Cardiac septum (tissue), 1 donor: ENCODE measurements at regions of chr6 and their contacts with region 1.

Region 1: DNA sequence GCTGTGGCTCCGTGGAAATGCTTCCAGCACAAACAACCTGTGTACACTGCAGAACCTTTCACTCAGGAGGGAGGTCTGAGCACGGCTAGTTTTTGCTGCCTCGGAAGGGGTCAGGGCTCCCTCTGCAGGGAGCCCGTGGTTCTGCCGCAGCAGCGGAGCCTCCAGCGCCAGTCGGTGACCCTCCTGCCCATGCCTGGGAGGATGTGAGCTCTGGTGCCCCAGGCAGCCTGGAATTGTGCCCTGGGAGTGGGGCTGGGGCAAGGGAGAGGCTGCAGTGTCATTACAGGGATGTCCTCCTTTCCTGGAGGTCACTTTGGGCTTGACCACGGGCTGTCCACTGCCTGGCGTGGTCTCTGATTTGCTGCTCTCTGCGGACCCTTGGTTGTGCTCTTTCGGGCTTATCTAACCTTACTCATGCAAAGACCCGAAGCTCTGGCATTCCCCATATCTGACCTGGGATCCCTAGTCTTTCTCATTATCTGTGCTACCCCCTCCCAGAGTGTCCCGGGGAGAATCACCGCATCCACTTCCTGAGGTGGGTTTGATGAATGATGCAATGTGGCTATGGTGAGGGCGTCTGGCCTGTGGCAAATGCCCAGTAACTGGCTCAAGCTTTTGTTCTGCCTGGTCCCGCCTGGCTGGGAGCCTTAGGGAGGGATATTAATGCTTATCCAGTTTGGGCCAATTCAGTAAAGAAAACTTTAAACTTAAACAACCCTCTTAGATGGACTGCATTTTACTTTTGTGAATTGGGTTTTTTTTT is 59.6 kb upstream of the TAGAP start:
- DNase-seq: peak; percentile 87

Region 2: DNA sequence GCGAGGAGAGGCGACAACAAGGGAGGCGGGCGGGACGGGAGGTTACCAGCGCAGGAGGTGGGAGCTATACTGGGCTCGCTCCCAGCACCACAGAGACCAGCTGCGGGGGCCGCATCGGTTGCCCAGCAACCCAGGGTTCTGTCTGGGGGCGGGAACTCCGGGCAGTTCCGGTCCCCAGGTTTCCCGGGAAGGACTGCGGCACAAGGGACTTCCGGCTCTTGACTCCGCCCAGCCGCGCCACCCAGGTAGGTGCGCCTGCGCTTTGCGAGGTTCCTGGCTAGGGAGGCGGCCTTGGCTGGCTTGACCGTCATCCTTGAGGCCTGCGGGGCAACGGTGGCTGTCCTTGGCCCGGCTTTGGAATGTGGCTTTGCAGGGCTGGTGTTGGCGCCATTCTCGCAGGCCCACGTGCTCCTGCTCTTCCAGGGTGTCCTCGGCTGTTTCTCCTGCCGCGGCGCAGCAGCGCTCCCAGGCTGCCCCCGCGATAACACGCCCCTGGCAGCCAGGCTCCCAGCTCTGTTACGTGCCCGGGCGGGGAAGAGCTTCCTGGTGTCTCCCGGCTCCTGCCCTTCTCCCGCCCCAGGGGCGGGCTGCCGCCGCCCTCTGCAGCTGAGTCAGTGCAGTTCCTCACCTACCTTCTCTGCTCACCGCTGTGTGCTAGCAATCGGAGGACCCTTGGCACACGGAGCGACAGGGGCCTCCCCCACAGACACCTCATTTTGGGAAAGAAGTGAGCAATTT is 104.5 kb before region 1 on chr6 and contains the start of gene RSPH3:
- intact Hi-C with region 1: loop called (anchors 10 kb)
- DNase-seq: peak; percentile 98
- total RNA-seq, gene RSPH3: 8.9 TPM

Region 3: GRCh38 chr6:159373670-159374069 is 269.3 kb after region 1 on chr6:
- intact Hi-C with region 1: no loop called
- DNase-seq: no peak